ENCODE measurements at regions of chr3 and their contacts with region 1.

Region 1: DNA sequence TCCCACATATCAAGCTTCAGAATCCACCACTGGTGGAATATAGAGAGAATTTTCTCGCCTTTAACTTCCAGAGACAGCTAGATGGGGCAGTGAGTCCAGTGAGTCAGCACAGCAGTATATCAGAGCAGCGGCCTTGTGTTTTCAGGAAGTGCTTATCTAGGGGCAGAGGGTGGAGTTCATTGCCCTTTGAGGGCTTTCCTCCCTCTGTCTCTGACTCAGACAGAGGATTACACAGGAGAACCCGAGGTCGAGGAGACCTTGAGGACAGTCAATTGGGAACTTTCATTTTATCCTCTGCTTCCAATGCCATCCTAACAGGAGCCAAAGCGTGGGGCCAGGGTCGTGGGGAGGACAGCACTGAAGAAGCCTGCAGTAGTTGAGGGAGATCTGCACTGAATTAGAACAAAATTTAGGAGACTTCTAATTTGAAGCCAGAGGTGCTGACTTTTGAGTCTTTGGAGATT is 109.6 kb upstream of the UMPS start:
- DNase-seq: no peak
- H3K4me3 ChIP-seq: peak overlapping the region in 1 of 4 donors; percentile 11
- H3K27ac ChIP-seq: peak overlapping the region in 3 of 4 donors; percentile 8 to 51 (median 13)
- H3K4me1 ChIP-seq: peaks cover 0 to 13% (median 13%) of the 10 kb centered on the region in 3 donors
- H3K27me3 ChIP-seq: no peaks in the 10 kb centered on the region
- CTCF ChIP-seq: no peak
- POLR2A ChIP-seq: no peak

Region 2: DNA sequence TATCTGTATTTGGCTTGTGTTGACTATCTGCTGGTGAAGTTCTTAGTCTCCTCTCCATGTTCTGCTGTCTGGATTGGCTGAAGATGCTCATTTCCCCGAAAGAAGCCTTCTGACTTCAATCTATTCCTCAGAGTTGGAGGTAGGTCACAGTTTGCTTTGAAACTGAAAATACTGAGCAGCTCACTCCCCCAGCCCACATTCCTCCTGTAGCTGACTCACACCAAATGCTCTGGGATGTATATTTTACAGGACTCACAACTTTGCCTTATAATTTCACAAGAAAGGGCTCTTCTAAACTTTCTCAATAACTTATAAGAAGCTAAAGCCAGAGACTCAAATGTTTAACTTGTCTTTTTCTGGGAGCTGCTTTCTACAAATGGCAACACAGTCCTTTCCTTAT is 935.7 kb after region 1 on chr3:
- intact Hi-C with region 1: loop called (anchors 10 kb)
- DNase-seq: no peak
- H3K4me3 ChIP-seq: no peak overlapping the region
- H3K27ac ChIP-seq: no peak overlapping the region
- H3K4me1 ChIP-seq: no peaks in the 10 kb centered on the region
- H3K27me3 ChIP-seq: no peaks in the 10 kb centered on the region
- CTCF ChIP-seq: no peak
- POLR2A ChIP-seq: no peak

Region 3: GRCh38 chr3:125651244-125651643 is 1030.6 kb after region 1 on chr3:
- intact Hi-C with region 1: no loop called
- DNase-seq: no peak
- H3K4me3 ChIP-seq: no peak overlapping the region
- H3K27ac ChIP-seq: no peak overlapping the region
- H3K4me1 ChIP-seq: peaks cover 0 to 22% (median 0%) of the 10 kb centered on the region in 3 donors
- H3K27me3 ChIP-seq: no peaks in the 10 kb centered on the region
- CTCF ChIP-seq: no peak
- POLR2A ChIP-seq: no peak